ENCODE measurements at regions of chr5 and their contacts with region 1.

Region 1: DNA sequence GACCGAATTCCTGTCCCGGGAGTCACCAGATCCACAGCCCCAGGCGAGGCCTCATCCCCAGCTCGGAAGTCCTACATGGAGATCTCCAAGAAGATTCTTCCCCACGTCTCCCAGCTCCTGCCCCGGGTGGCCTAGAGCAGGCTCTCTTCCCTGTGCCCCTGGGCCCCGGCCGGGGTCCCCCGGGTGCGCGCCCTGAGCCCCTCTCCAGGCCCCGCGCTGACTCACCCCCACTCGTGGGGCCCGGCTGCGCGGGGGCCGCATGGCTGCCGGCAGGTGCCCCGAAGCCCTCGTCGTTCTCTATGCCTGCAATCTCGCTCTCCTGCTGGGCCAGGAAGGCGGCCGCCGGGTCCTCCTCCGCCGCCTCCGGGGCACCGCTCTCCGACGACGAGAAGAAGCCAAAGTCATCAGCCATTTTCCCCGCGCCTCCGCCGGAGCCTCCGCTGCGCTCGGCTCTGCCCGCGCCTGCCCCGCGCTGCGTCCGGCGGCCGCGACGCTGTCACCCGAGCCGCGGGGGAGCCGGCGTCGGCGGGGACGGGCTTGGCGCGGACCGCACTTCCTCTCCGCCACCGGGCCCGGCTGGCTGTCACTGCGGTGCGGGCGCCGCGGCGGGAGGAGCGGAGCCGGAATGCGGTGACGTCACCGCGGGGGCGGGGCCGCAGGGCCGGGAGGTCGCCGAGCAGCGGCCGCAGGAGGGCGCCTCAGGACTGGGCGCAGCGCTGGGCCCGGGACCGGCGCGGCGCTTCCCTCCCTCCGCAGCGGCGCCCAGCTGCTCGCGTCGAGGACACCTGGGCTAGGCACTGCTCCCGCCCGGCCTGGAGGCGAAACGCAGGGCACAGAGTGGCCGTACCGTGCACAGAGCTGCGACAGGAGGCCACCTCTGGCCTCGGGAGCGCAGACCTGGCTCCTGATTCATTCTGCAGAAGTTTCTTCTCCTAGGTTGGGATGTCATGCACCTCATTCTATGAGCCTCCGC is at the start of gene CLTB:
- DNase-seq: peak; percentile 95
- CTCF ChIP-seq: peak; percentile 87

Region 2: GRCh38 chr5:176405656-176406427 is 10.4 kb before region 1 on chr5:
- CTCF ChIA-PET with region 1: interaction called, 22 read pairs
- POLR2A ChIA-PET with region 1: interaction called, 7 read pairs
- DNase-seq: no peak
- CTCF ChIP-seq: no peak

Region 3: DNA sequence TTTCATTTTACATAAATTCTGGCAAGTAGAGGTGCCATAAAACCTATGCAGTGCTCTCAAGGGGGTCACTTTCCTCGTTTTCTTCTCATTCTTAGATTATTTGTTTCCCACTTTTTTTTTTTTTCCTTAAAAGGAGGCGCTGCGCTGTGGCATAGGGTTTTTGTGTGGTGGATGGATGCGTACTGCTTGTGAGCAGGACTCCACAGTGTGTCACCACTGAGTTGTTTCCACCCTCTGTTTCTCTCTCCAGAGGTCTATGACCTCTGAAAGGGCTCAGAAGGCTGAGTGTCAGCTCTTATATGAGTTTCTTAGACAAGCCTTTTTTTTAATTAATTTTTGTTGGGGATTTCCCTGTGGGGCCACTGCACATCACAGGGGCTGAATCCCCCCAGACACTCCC is 13.7 kb after region 1 on chr5:
- CTCF ChIA-PET with region 1: interaction called, 18 read pairs
- POLR2A ChIA-PET with region 1: no interaction called
- DNase-seq: no peak
- CTCF ChIP-seq: no peak

Region 4: DNA sequence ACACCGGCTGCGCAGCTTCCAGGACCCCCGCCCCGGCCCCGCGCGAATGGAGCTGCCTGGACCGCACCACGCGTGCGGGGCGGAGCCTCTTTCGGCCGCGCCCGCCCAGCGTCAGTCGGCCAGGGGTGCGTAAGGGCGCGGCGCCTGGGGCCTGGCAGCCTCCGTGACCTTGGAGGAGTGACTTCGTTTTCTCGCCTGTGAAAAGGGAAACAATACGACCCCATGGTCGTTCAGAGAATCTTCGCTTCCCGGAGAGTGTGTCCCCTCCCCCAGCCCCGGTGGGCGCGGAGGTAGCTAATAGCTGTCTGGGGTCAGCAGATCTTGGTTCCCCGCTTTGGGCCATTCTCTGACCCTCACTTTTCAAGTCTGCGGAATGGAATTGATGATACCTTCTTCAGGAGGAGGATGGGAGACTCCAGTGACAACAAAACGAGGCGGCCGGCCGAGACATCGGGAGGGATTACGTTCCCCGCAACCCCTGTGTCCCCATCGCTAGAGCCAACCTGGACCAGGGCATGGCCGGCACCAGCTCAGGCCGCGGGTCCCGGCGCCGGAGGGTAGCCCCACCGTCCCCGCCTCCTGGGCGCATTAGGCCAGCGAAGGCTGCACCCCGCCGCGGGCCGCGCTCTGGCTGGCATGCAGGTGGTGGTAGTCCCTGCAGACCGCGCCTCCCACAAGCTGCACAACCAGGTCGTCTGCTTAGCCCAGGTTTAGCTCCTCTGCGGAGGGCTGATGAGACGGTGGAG is 127.4 kb after region 1 on chr5:
- CTCF ChIA-PET with region 1: interaction called, 32 read pairs
- POLR2A ChIA-PET with region 1: no interaction called
- DNase-seq: peak; percentile 73
- CTCF ChIP-seq: peak; percentile 6

Region 5: GRCh38 chr5:176573564-176574296 is 157.5 kb after region 1 on chr5:
- CTCF ChIA-PET with region 1: interaction called, 13 read pairs
- POLR2A ChIA-PET with region 1: no interaction called
- DNase-seq: peak; percentile 88
- CTCF ChIP-seq: peak; percentile 81